Activated CD4-positive, alpha-beta T cell treated with anti-CD3 and anti-CD28 coated beads for 36 hours (primary cell): ENCODE measurements at regions of chr22 and their contacts with region 1.

Region 1: GRCh38 chr22:46674367-46674781 is 54.2 kb downstream of the GRAMD4 start:
- DNase-seq: peak; percentile 99
- ATAC-seq: peak; percentile 94
- H3K4me3 Mint-ChIP-seq: peak overlapping the region; percentile 85
- H3K27ac Mint-ChIP-seq: peak overlapping the region; percentile 96
- H3K4me1 Mint-ChIP-seq: peaks cover 49% of the 10 kb centered on the region
- H3K27me3 Mint-ChIP-seq: no peaks in the 10 kb centered on the region

Region 2: DNA sequence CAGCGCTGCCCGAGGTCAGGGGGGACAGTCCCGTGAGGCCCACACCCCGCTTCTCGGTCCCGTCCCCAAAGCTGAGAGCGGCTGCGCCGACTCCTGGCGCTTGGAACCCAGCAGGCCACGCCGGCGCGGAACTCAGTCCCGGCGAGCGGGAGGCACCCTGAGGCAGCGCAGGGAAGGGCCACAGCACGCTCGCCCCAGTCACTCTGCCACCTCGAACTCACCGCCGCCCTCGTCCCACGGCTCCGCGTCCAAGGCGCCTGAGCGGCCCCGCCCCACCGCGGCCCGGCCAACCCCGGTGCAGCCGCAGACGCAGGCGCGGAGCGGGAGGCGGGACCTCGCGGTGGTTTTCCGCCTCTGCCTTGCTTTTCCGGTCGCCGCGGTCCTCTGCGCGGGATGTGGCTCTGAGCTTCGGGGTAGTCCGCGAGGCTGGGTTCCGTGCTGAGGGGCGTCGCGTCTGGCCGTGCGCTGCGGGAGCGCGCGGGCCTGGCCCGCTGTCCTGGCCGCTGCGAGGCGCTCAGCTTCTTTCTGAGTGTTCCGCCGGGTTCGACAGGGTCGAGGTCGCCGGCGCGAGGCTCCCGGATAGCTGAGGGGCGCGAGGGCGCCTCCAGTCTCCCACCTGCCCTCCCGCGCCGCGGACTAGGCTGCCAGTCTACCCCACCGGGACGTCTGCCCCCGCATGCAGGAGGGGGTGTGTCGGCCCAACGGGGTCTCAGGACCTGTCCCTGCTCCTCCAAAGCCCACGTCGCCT is 424.2 kb before region 1 on chr22 and contains the start of gene CDPF1:
- CTCF ChIA-PET with region 1: no interaction called
- POLR2A ChIA-PET with region 1: no interaction called
- intact Hi-C with region 1: loop called in 1 of 2 experiments (anchors 1 kb)
- DNase-seq: peak; percentile 96
- ATAC-seq: peak; percentile 92
- H3K4me3 Mint-ChIP-seq: peak within 1 kb of the TSS; percentile 79
- H3K27ac Mint-ChIP-seq: peak within 1 kb of the TSS; percentile 80
- H3K4me1 Mint-ChIP-seq: peaks cover 25% of the 10 kb centered on the region
- H3K27me3 Mint-ChIP-seq: no peaks in the 10 kb centered on the region
- total RNA-seq, gene CDPF1: 8.1 to 8.8 TPM

Region 3: DNA sequence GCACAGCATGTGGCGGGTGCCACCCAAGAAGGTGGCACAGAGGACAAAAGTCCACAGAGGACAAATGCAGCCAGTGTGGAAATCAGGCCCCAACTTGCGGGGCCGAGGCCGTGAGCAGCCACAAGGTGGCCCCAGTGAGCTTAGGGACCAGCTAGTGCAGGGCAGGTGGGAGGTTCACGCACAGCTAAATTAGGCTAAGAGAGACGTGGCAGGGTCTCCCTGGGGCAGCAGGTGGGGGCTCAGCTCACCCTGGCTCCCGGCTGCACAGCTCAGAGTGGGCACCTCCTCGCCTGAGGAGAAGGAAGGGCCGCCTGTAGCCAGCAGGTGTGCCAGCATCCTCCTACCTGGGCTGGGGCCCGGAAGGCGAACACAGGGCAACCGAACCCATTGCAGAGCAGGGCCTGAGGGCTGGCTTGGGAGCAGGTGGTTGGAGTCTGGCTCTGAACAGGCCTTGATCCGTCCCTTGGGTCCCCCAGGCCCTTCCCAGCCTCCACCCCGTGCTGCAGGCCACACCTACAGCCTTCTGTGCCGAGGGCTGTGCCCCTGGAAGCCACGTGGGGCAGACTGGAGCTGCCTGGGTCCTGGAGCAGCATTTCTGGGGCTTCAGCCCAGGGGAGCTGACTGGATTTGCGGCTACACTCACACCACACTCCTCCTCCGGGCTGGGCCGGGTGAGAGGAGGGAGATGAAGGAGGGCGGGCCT is 110.8 kb before region 1 on chr22:
- CTCF ChIA-PET with region 1: interaction called, 5 read pairs
- POLR2A ChIA-PET with region 1: no interaction called
- intact Hi-C with region 1: loop called (anchors 1 kb)
- DNase-seq: peak; percentile 90
- ATAC-seq: peak; percentile 87
- H3K4me3 Mint-ChIP-seq: peak overlapping the region; percentile 33
- H3K27ac Mint-ChIP-seq: peak overlapping the region; percentile 51
- H3K4me1 Mint-ChIP-seq: peaks cover 9% of the 10 kb centered on the region
- H3K27me3 Mint-ChIP-seq: no peaks in the 10 kb centered on the region

Region 4: GRCh38 chr22:46592390-46592872 is 81.9 kb before region 1 on chr22:
- CTCF ChIA-PET with region 1: no interaction called
- POLR2A ChIA-PET with region 1: interaction called, 3 read pairs
- intact Hi-C with region 1: loop called in 1 of 2 experiments (anchors 1 kb)
- DNase-seq: peak; percentile 80
- ATAC-seq: peak; percentile 77
- H3K4me3 Mint-ChIP-seq: peak overlapping the region; percentile 47
- H3K27ac Mint-ChIP-seq: peak overlapping the region; percentile 85
- H3K4me1 Mint-ChIP-seq: peaks cover 25% of the 10 kb centered on the region
- H3K27me3 Mint-ChIP-seq: no peaks in the 10 kb centered on the region

Region 5: GRCh38 chr22:46613606-46614021 is 60.8 kb before region 1 on chr22:
- CTCF ChIA-PET with region 1: no interaction called
- POLR2A ChIA-PET with region 1: no interaction called
- intact Hi-C with region 1: loop called (anchors 1 to 2 kb)
- DNase-seq: peak; percentile 58
- ATAC-seq: peak; percentile 42
- H3K4me3 Mint-ChIP-seq: peak overlapping the region; percentile 80
- H3K27ac Mint-ChIP-seq: peak overlapping the region; percentile 94
- H3K4me1 Mint-ChIP-seq: peaks cover 28% of the 10 kb centered on the region
- H3K27me3 Mint-ChIP-seq: no peaks in the 10 kb centered on the region

Region 6: DNA sequence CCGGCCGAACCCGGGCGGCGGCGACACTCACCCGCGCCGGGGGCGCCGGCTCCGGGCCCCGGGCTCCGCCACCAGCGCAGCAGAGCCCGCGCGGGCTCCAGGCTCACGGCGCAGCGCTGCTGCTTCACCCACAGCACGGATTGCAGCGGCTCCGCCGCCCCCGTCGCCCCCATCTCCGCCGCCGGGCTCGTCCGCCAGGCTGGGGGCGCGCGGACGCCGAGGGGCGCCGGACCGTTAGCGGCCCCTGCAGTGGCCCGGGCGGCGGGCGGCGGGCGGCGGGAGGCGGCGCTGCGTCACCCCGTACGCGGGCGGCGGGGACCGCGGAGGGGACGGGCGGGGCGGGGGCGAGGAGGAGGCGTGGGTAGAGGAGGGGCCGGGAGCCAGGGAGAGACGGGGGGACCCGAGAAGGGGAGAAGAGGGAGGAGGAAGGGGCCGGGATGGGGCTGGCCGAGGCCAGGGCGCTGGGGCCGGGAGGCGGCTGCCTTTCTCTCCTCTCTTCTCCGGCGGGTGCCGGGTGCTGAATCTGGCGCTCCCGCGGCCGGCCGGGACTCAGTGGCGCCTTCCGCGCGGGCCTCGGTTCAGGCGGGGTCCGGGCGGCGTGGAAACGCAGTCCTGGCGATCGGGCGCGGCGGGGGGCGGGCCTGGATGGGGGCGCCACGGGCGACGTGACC is 63.7 kb after region 1 on chr22 and contains the start of gene CERK:
- CTCF ChIA-PET with region 1: no interaction called
- POLR2A ChIA-PET with region 1: no interaction called
- intact Hi-C with region 1: loop called in 1 of 2 experiments (anchors 1 kb)
- DNase-seq: peak; percentile 76
- ATAC-seq: peak; percentile 24
- H3K4me3 Mint-ChIP-seq: peak within 1 kb of the TSS; percentile 99
- H3K27ac Mint-ChIP-seq: peak within 1 kb of the TSS; percentile 97
- H3K4me1 Mint-ChIP-seq: peaks cover 39% of the 10 kb centered on the region
- H3K27me3 Mint-ChIP-seq: no peaks in the 10 kb centered on the region
- total RNA-seq, gene CERK: 27.0 to 32.8 TPM

Region 7: GRCh38 chr22:46791201-46791731 is 116.9 kb after region 1 on chr22:
- CTCF ChIA-PET with region 1: no interaction called
- POLR2A ChIA-PET with region 1: no interaction called
- intact Hi-C with region 1: loop called in 1 of 2 experiments (anchors 1 kb)
- DNase-seq: peak; percentile 88
- ATAC-seq: peak; percentile 93
- H3K4me3 Mint-ChIP-seq: peak overlapping the region; percentile 73
- H3K27ac Mint-ChIP-seq: peak overlapping the region; percentile 96
- H3K4me1 Mint-ChIP-seq: peaks cover 51% of the 10 kb centered on the region
- H3K27me3 Mint-ChIP-seq: no peaks in the 10 kb centered on the region

Region 8: DNA sequence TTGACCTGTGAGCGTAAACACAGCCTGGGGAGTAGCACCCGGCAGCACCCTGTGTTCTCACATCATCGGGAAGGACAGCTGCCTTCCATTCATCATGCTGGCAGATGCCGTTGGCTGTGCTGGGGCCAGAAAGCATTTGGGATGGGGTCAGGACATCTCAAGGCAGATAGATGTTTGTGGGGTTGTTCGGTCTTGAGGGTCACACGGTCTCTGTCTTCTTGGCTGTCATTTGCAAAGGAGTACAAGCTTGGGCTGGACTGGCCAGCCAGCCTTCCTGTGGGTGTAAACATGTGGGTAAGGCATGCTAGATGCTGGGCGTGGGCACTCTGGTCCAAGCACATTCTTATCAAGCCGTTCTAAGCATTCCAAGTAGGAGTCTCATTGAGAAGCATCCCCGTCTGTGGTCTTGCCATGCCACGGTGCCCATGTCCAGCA is 169.5 kb after region 1 on chr22:
- CTCF ChIA-PET with region 1: no interaction called
- POLR2A ChIA-PET with region 1: no interaction called
- intact Hi-C with region 1: no loop called
- DNase-seq: no peak
- ATAC-seq: no peak
- H3K4me3 Mint-ChIP-seq: no peak overlapping the region
- H3K27ac Mint-ChIP-seq: no peak overlapping the region
- H3K4me1 Mint-ChIP-seq: peaks cover 19% of the 10 kb centered on the region
- H3K27me3 Mint-ChIP-seq: no peaks in the 10 kb centered on the region